BJ (cell line): ENCODE measurements at regions of chr1 and their contacts with region 1.

Region 1: GRCh38 chr1:70134148-70134547 is 71.2 kb downstream of the LRRC40 start:
- DNase-seq: no peak
- H3K4me3 ChIP-seq: no peak overlapping the region
- H3K27me3 ChIP-seq: peaks cover 2% of the 10 kb centered on the region; the same call in 1 of the 2 replicates
- CTCF ChIP-seq: no peak

Region 2: GRCh38 chr1:70093250-70093975 is 40.7 kb before region 1 on chr1:
- CTCF ChIA-PET with region 1: no interaction called
- POLR2A ChIA-PET with region 1: no interaction called
- DNase-seq: peak; percentile 19
- H3K4me3 ChIP-seq: no peak overlapping the region
- H3K27me3 ChIP-seq: no peaks in the 10 kb centered on the region
- CTCF ChIP-seq: no peak

Region 3: DNA sequence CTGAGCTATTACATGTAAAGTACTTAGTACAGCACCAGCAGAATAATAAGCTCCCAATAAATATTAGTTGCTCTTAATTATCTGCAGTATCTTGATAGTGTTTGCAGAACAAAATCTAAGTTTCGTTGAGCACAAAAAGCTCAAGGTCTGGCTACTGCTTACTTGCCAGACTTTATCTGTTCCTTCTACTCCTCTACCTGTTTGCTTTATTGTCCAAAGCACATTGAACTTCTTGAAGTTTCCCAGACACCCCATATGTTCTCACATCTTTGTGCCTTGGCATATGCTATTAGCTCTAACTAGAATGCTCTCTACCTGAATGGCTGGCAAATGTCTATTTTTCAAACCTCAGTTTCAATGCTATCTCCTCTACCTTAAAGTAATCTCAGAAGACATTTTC is 16.3 kb after region 1 on chr1:
- CTCF ChIA-PET with region 1: interaction called, 11 read pairs
- POLR2A ChIA-PET with region 1: no interaction called
- DNase-seq: no peak
- H3K4me3 ChIP-seq: no peak overlapping the region
- H3K27me3 ChIP-seq: no peaks in the 10 kb centered on the region
- CTCF ChIP-seq: no peak

Region 4: GRCh38 chr1:70205434-70206118 is 71.4 kb after region 1 on chr1 and contains the start of gene LRRC40:
- CTCF ChIA-PET with region 1: no interaction called
- POLR2A ChIA-PET with region 1: no interaction called
- DNase-seq: peak; percentile 73
- H3K4me3 ChIP-seq: peak within 1 kb of the TSS; percentile 97
- H3K27me3 ChIP-seq: no peaks in the 10 kb centered on the region
- CTCF ChIP-seq: no peak; the same call in 1 of the 2 replicates
- polyA plus RNA-seq, gene LRRC40: 5.0 and 12.3 TPM in 2 replicates

Region 5: GRCh38 chr1:70311369-70311768 is 177.2 kb after region 1 on chr1:
- CTCF ChIA-PET with region 1: no interaction called
- POLR2A ChIA-PET with region 1: no interaction called
- DNase-seq: no peak
- H3K4me3 ChIP-seq: no peak overlapping the region
- H3K27me3 ChIP-seq: no peaks in the 10 kb centered on the region
- CTCF ChIP-seq: no peak